HepG2 (cell line): ENCODE measurements at regions of chr11 and their contacts with region 1.

Region 1: GRCh38 chr11:120182790-120183491 is 27.9 kb upstream of the OAF start:
- DNase-seq: peak; percentile 73
- ATAC-seq: peak; percentile 53
- H3K4me3 ChIP-seq: peak overlapping the region in 1 of 3 experiments; percentile 41; a peak in 1 of 6 replicates
- H3K27ac ChIP-seq: peak overlapping the region; percentile 51
- H3K4me1 ChIP-seq: peaks cover 82% of the 10 kb centered on the region
- H3K27me3 ChIP-seq: no peaks in the 10 kb centered on the region
- CTCF ChIP-seq: peak; percentile 89
- EP300 ChIP-seq: no peak
- POLR2A ChIP-seq: no peak
- RAD21 ChIP-seq: peak; percentile 63

Region 2: GRCh38 chr11:120197251-120197891 is 14.4 kb after region 1 on chr11:
- CTCF ChIA-PET with region 1: no interaction called
- POLR2A ChIA-PET with region 1: interaction called, 160 read pairs
- in situ Hi-C with region 1: no loop called
- intact Hi-C with region 1: loop called (anchors 1 kb)
- DNase-seq: peak; percentile 66
- ATAC-seq: peak; percentile 63
- H3K4me3 ChIP-seq: peak overlapping the region; percentile 28 to 58 (median 34); a peak in 5 of 6 replicates
- H3K27ac ChIP-seq: peak overlapping the region; percentile 77
- H3K4me1 ChIP-seq: peaks cover 97% of the 10 kb centered on the region
- H3K27me3 ChIP-seq: no peaks in the 10 kb centered on the region
- CTCF ChIP-seq: no peak
- EP300 ChIP-seq: no peak
- POLR2A ChIP-seq: no peak
- RAD21 ChIP-seq: no peak

Region 3: GRCh38 chr11:120210626-120211521 is 27.9 kb after region 1 on chr11 and contains the start of gene OAF:
- CTCF ChIA-PET with region 1: no interaction called
- POLR2A ChIA-PET with region 1: interaction called, 92 read pairs
- in situ Hi-C with region 1: no loop called
- intact Hi-C with region 1: loop called (anchors 2 kb)
- DNase-seq: peak; percentile 86
- ATAC-seq: peak; percentile 74
- H3K4me3 ChIP-seq: peak within 1 kb of the TSS; percentile 74 to 87 (median 86)
- H3K27ac ChIP-seq: peak within 1 kb of the TSS; percentile 66
- H3K4me1 ChIP-seq: peaks cover 81% of the 10 kb centered on the region
- H3K27me3 ChIP-seq: no peaks in the 10 kb centered on the region
- CTCF ChIP-seq: 0 out of 2 replicates have a peak, but pooled peaks have one; percentile 2
- EP300 ChIP-seq: peak in 1 of 2 experiments; percentile 27; a peak in 1 of 4 replicates
- POLR2A ChIP-seq: peak in 1 of 2 experiments; percentile 66; a peak in 3 of 4 replicates
- RAD21 ChIP-seq: peak; percentile 80
- total RNA-seq, gene OAF: 37.5 and 63.7 TPM in 2 replicates

Region 4: GRCh38 chr11:120608760-120609211 is 425.8 kb after region 1 on chr11:
- CTCF ChIA-PET with region 1: no interaction called
- POLR2A ChIA-PET with region 1: no interaction called
- in situ Hi-C with region 1: no loop called
- intact Hi-C with region 1: no loop called
- DNase-seq: no peak
- ATAC-seq: no peak
- H3K4me3 ChIP-seq: no peak overlapping the region
- H3K27ac ChIP-seq: no peak overlapping the region
- H3K4me1 ChIP-seq: peaks cover 13% of the 10 kb centered on the region
- H3K27me3 ChIP-seq: peaks cover 1 to 4% of the 10 kb centered on the region in 2 experiments; a peak in 3 of 5 replicates
- CTCF ChIP-seq: no peak
- EP300 ChIP-seq: no peak
- POLR2A ChIP-seq: no peak
- RAD21 ChIP-seq: no peak